ENCODE measurements at regions of chr7 and their contacts with region 1.

Region 1: DNA sequence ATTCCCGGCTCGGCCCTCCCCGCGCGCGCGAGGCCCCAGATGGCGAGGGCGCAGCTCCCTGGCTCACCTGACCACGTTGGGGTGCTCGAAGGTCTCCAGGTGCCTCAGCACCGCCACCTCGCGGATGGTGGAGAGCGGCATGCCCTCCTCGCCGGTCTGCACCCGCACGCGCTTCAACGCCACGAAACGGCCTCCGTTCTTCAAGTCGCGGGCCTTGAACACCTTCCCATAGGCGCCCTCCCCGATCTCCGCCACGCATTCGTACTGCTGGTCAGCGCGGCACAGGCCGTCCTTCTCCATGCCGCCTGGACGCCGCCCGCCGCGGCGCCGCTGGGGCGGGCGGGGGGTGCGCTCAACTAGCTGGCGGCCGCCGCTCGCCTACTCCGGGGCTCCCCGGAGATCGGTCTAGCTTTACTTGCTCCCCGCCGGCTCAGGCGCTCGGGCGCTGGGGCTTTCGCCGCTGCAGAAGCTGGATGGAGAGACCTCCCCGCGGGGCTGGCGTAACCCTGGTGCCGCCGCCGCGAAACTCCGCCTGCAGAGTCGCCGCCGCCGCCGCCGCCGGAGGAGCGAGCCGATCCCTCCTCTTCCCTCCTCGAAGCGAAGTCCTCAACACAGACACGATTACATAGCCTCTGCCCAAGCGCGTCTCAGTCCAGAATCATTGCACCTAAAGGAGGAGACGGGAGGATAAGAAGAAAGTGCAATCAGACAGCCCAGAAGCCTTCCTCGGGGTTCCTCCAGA is 3.2 kb downstream of the CDK6 start:
- DNase-seq: peak; percentile 86 to 94 (median 90)
- ATAC-seq: peak; percentile 76 to 87 (median 86)
- H3K4me3 ChIP-seq: peak overlapping the region; percentile 63 to 85 (median 76)
- H3K27ac ChIP-seq: peak overlapping the region; percentile 34 to 89 (median 76)
- H3K4me1 ChIP-seq: peaks cover 0 to 36% (median 35%) of the 10 kb centered on the region in 3 donors
- H3K27me3 ChIP-seq: no peaks in the 10 kb centered on the region
- CTCF ChIP-seq: peak; percentile 73 to 88 (median 80)

Region 2: GRCh38 chr7:92621026-92621540 is 212.1 kb before region 1 on chr7:
- intact Hi-C with region 1: loop called in 1 of 3 experiments (anchors 5 kb)
- DNase-seq: peak in 5 of 6 donors; percentile 50 to 72 (median 64)
- ATAC-seq: peak; percentile 86 to 98 (median 96)
- H3K4me3 ChIP-seq: no peak overlapping the region
- H3K27ac ChIP-seq: peak overlapping the region in 1 of 4 donors; percentile 14
- H3K4me1 ChIP-seq: peaks cover 0 to 6% (median 0%) of the 10 kb centered on the region in 3 donors
- H3K27me3 ChIP-seq: no peaks in the 10 kb centered on the region
- CTCF ChIP-seq: peak; percentile 32 to 65 (median 50)

Region 3: GRCh38 chr7:92695308-92696261 is 137.6 kb before region 1 on chr7:
- intact Hi-C with region 1: loop called in 2 of 3 experiments (anchors 5 to 10 kb)
- DNase-seq: peak; percentile 49 to 88 (median 66)
- ATAC-seq: peak; percentile 65 to 89 (median 84)
- H3K4me3 ChIP-seq: peak overlapping the region; percentile 5 to 47 (median 30)
- H3K27ac ChIP-seq: peak overlapping the region; percentile 9 to 83 (median 74)
- H3K4me1 ChIP-seq: peaks cover 29 to 48% (median 47%) of the 10 kb centered on the region in 3 donors
- H3K27me3 ChIP-seq: no peaks in the 10 kb centered on the region
- CTCF ChIP-seq: no peak

Region 4: GRCh38 chr7:92708111-92709042 is 124.8 kb before region 1 on chr7:
- intact Hi-C with region 1: loop called in 1 of 3 experiments (anchors 10 kb)
- DNase-seq: no peak
- ATAC-seq: no peak
- H3K4me3 ChIP-seq: no peak overlapping the region
- H3K27ac ChIP-seq: no peak overlapping the region
- H3K4me1 ChIP-seq: no peaks in the 10 kb centered on the region
- H3K27me3 ChIP-seq: no peaks in the 10 kb centered on the region
- CTCF ChIP-seq: no peak